Posterior vena cava (tissue), 2 donors: ENCODE measurements at regions of chr16 and their contacts with region 1.

Region 1: DNA sequence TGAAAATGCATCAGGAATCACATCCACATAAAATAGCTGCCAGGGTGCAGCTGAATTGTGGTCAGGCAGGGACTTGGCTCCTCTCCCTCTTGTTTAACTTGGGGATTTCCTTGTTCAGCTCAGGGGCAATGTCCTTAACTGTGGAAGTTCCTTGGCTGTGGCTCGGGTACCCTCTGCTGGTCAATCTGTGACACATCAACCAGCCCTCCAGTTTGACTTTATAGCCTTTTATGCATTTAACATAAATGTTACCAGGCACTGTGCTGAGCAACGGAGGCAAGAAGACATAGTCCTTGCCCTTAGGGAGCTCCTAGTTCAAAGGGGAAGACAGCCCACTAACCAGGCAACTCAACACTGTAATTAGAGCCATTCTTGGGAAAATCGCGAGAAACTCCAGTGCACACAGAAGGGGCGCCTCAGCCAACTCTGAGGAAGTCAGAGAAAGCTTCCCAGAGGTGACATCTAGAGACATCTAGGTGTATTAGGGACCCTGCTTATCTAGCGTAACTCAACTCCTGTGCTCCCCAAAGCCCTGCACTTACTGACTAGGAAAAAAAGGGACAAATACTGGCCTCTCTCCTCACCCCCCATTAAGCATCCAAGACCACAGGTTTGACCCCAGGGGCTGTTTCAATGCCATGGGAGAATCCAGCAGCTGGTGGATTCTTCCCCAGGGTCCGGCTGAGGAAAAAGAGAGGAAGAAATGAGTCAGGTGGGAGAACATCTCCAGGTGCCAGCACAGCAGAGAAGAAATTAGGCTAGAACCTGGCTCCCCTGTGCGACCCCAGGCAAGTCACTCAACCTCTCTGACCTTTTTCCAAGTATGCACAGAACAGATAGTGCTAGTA is 17.3 kb upstream of the EEF2K start:
- DNase-seq: peak; percentile 82

Region 2: GRCh38 chr16:21946889-21947635 is 241.8 kb before region 1 on chr16:
- intact Hi-C with region 1: loop called in 1 of 2 experiments (anchors 5 kb)
- DNase-seq: no peak

Region 3: DNA sequence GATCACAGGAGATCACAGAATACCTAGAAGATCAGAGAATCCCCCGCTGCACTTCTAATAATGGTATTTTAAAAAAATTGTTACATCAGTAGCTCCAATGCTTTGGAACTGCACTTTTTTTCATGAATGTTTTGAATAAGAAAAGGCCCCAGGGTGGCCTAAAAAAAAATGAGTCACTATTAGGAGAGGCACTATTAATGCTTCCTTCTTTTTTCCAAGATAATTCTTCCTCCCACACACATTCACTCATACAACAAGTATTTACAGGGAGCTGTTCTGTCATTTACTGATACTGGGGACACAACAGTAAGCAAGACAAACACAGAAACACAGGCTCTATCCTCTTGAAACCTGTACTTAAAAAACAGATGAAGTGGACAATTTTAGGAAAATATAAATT is 187.2 kb before region 1 on chr16:
- intact Hi-C with region 1: loop called (anchors 5 to 10 kb)
- DNase-seq: no peak

Region 4: GRCh38 chr16:22007509-22008214 is 181.2 kb before region 1 on chr16 and contains the start of gene MOSMO:
- intact Hi-C with region 1: loop called (anchors 5 to 10 kb)
- DNase-seq: peak; percentile 92
- total RNA-seq, gene MOSMO: 13.3 to 16.1 TPM

Region 5: GRCh38 chr16:22161999-22162655 is 26.7 kb before region 1 on chr16 and contains the start of gene SDR42E2:
- intact Hi-C with region 1: no loop called
- DNase-seq: no peak
- total RNA-seq, gene SDR42E2: not detected